Activated CD8-positive, alpha-beta T cell treated with anti-CD3 and anti-CD28 coated beads for 36 hours (primary cell): ENCODE measurements at regions of chr15 and their contacts with region 1.

Region 1: DNA sequence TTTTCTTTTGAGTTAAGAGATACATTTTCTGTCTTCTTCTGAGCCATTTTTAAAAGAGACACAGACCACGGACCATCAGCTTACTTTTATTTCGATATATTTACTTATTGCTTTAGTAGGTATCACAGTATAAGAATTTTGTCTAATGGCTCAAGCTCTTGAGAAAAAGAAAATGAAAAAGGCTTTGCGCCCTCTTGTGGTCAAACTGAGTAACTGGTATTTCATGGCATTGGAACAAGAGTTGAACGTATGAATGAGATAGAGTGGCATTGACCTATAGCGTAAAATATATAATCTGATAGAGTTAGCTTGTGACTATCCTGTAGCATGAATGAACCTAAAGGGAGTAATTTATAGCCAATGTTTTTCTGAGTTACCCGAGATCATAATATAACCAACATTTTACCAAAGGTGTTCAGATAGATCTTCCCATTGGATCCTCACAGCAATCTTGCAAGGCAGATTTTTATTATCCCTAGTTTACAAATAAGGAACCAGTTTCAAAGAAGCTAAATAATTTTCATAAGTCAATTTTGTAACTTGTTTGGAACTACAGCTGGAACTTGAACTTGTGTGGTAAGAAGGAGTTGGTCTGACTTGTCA is 154.6 kb downstream of the POLR2M start:
- DNase-seq: peak; percentile 33
- ATAC-seq: no peak
- H3K4me3 Mint-ChIP-seq: no peak overlapping the region
- H3K27ac Mint-ChIP-seq: no peak overlapping the region
- H3K4me1 Mint-ChIP-seq: no peaks in the 10 kb centered on the region
- H3K27me3 Mint-ChIP-seq: peaks cover 13% of the 10 kb centered on the region
- CTCF ChIP-seq: peak; percentile 80

Region 2: GRCh38 chr15:57732526-57733331 is 128.4 kb before region 1 on chr15:
- CTCF ChIA-PET with region 1: interaction called, 45 read pairs
- POLR2A ChIA-PET with region 1: no interaction called
- intact Hi-C with region 1: no loop called
- DNase-seq: peak; percentile 69
- ATAC-seq: no peak
- H3K4me3 Mint-ChIP-seq: no peak overlapping the region
- H3K27ac Mint-ChIP-seq: no peak overlapping the region
- H3K4me1 Mint-ChIP-seq: peaks cover 3% of the 10 kb centered on the region
- H3K27me3 Mint-ChIP-seq: no peaks in the 10 kb centered on the region
- CTCF ChIP-seq: peak; percentile 97

Region 3: GRCh38 chr15:57751177-57751800 is 109.8 kb before region 1 on chr15:
- CTCF ChIA-PET with region 1: interaction called, 50 read pairs
- POLR2A ChIA-PET with region 1: no interaction called
- intact Hi-C with region 1: loop called (anchors 2 kb)
- DNase-seq: no peak
- ATAC-seq: no peak
- H3K4me3 Mint-ChIP-seq: no peak overlapping the region
- H3K27ac Mint-ChIP-seq: no peak overlapping the region
- H3K4me1 Mint-ChIP-seq: no peaks in the 10 kb centered on the region
- H3K27me3 Mint-ChIP-seq: no peaks in the 10 kb centered on the region
- CTCF ChIP-seq: peak; percentile 17

Region 4: DNA sequence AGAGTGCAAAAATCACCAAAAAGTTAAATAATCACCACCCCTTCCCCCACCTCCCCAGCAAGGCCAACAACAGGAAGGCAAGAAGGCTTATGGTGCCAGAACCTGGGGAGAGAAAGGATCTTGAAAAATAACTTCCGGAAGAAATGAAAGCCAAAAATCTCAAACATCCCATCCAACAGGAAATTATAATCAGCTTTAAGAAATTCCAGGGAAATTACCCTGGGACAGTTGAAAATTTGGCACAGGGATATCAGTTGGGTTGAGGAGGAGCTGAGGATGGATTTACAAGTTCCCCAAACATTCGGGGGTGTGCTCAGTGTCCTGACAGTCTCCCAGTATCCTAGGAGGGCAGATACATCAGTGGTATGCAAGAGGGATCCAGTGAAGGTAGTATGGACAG is 71.9 kb before region 1 on chr15:
- CTCF ChIA-PET with region 1: interaction called, 11 read pairs
- POLR2A ChIA-PET with region 1: interaction called, 3 read pairs
- intact Hi-C with region 1: no loop called
- DNase-seq: no peak
- ATAC-seq: no peak
- H3K4me3 Mint-ChIP-seq: no peak overlapping the region
- H3K27ac Mint-ChIP-seq: no peak overlapping the region
- H3K4me1 Mint-ChIP-seq: peaks cover 2% of the 10 kb centered on the region
- H3K27me3 Mint-ChIP-seq: peaks cover 3% of the 10 kb centered on the region
- CTCF ChIP-seq: no peak

Region 5: GRCh38 chr15:57872281-57873030 is 11.3 kb after region 1 on chr15:
- CTCF ChIA-PET with region 1: interaction called, 27 read pairs
- POLR2A ChIA-PET with region 1: no interaction called
- intact Hi-C with region 1: no loop called
- DNase-seq: no peak
- ATAC-seq: no peak
- H3K4me3 Mint-ChIP-seq: no peak overlapping the region
- H3K27ac Mint-ChIP-seq: no peak overlapping the region
- H3K4me1 Mint-ChIP-seq: peaks cover 7% of the 10 kb centered on the region
- H3K27me3 Mint-ChIP-seq: peaks cover 38% of the 10 kb centered on the region
- CTCF ChIP-seq: no peak

Region 6: GRCh38 chr15:58070801-58071418 is 209.8 kb after region 1 on chr15:
- CTCF ChIA-PET with region 1: interaction called, 25 read pairs
- POLR2A ChIA-PET with region 1: no interaction called
- intact Hi-C with region 1: loop called (anchors 5 kb)
- DNase-seq: peak; percentile 61
- ATAC-seq: no peak
- H3K4me3 Mint-ChIP-seq: no peak overlapping the region
- H3K27ac Mint-ChIP-seq: no peak overlapping the region
- H3K4me1 Mint-ChIP-seq: peaks cover 3% of the 10 kb centered on the region
- H3K27me3 Mint-ChIP-seq: peaks cover 27% of the 10 kb centered on the region
- CTCF ChIP-seq: peak; percentile 95